Activated T-helper 1 cell treated with anti-CD3 and anti-CD28 coated beads, Interleukin-12 subunit alpha, Interleukin-12 subunit beta, Interleukin-2, Interleukin-4 antibody, amounts not matched to agents 30 ng/mL and 10 ng/mL and 1 ng/mL, durations not matched to agents 14 hours and 24 hours and 36 hours (primary cell): ENCODE measurements at regions of chr2 and their contacts with region 1.

Region 1: DNA sequence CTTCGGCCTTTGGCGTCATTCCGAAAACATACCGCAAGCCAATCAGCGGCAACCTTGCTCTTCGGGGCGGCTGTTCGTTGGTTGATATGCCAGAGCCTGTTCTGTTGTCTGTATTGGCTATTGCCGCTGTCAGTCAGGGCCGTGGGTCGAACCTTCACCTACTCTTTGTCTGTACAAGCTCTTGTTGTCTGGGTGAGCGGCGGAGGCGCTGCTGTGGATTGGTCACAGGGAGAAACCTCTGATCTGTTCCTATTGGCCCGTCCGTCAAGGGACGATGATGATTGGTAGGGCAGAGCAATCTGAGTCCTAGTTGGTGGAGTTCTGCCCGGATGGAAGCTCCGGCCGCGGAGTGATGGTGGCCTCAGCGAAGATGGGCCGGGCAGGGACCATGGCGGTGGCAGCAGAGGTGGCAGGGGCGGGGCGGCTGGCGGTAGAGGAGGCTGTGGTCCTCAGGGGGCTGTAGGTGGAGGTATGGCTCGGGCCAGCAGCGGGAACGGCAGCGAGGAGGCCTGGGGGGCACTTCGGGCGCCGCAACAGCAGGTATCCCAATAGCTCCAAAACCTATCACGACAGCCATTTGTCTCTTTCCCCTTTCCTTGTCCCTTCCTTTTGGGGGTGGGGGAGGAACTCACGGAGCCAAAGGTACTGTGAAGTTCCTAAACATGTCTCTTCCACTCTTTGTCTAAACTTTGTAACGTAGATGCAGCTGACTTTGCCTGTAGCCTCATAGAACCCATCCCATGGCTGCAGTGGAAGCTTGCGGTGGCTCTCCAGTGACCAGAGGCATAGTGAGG is at the start of gene WBP1:
- DNase-seq: peak; percentile 99
- H3K4me3 Mint-ChIP-seq: peak within 1 kb of the TSS; percentile 98
- H3K27ac Mint-ChIP-seq: peak within 1 kb of the TSS; percentile 98
- H3K4me1 Mint-ChIP-seq: peaks cover 61% of the 10 kb centered on the region
- H3K27me3 Mint-ChIP-seq: no peaks in the 10 kb centered on the region
- total RNA-seq, gene WBP1: 32.6 and 35.3 TPM in 2 replicates

Region 2: GRCh38 chr2:73071360-73072133 is 1386.8 kb before region 1 on chr2 and contains the start of gene SFXN5:
- intact Hi-C with region 1: loop called (anchors 2 kb)
- DNase-seq: peak; percentile 96
- H3K4me3 Mint-ChIP-seq: peak within 1 kb of the TSS; percentile 87
- H3K27ac Mint-ChIP-seq: peak within 1 kb of the TSS; percentile 90
- H3K4me1 Mint-ChIP-seq: peaks cover 28% of the 10 kb centered on the region
- H3K27me3 Mint-ChIP-seq: peaks cover 20% of the 10 kb centered on the region
- total RNA-seq, gene SFXN5: 9.5 and 12.0 TPM in 2 replicates

Region 3: GRCh38 chr2:73736855-73737779 is 721.2 kb before region 1 on chr2 and contains the start of gene TPRKB:
- intact Hi-C with region 1: loop called (anchors 1 kb)
- DNase-seq: peak; percentile 94
- H3K4me3 Mint-ChIP-seq: peak within 1 kb of the TSS; percentile 97
- H3K27ac Mint-ChIP-seq: peak within 1 kb of the TSS; percentile 88
- H3K4me1 Mint-ChIP-seq: peaks cover 18% of the 10 kb centered on the region
- H3K27me3 Mint-ChIP-seq: peaks cover 3% of the 10 kb centered on the region
- total RNA-seq, gene TPRKB: 41.5 and 42.7 TPM in 2 replicates

Region 4: GRCh38 chr2:74178201-74179062 is 279.9 kb before region 1 on chr2 and contains the start of gene MOB1A:
- intact Hi-C with region 1: loop called (anchors 2 kb)
- DNase-seq: peak; percentile 99
- H3K4me3 Mint-ChIP-seq: peak within 1 kb of the TSS; percentile 88
- H3K27ac Mint-ChIP-seq: peak within 1 kb of the TSS; percentile 85
- H3K4me1 Mint-ChIP-seq: peaks cover 40% of the 10 kb centered on the region
- H3K27me3 Mint-ChIP-seq: no peaks in the 10 kb centered on the region
- total RNA-seq, gene MOB1A: 207 and 221 TPM in 2 replicates

Region 5: DNA sequence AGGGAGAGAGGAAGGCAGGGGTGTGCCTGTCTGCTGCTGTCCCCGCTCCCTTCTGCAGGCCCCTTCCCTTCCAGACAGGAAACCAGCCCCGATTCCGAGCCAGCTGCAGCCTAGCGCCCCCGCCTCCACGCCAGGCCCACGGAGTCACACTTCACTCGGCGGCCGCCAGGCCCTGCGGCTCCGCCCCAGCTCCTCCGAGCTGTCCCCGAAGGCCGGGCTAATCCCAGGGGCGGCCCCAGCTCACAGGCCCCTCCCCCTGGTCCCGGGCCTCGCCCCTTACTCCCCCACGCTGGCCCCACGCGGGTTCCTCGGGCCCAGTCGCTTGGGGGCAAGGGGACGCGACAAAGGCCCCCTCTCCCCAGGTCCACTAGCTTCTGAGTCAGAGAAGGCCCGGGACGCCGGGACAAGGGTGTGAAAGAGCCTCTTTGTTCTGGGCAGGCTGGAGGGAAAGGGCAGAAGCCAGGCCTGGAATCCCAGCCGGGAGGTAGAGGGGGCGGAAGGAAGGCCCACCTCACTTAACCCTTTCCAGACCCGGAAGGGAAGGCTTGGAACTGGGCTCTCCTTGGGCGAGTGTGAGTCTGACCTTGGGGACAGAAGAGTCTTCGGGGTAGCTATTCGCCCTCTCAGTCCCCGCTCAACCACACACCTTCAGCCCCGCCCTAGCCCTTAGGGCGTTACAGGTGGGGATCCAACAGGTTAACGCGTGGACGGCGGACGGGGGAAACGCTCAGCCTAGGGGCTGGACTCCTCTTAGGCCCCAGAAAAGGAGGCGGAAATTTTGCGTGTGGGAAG is 17.8 kb before region 1 on chr2:
- intact Hi-C with region 1: loop called (anchors 2 kb)
- DNase-seq: peak; percentile 37
- H3K4me3 Mint-ChIP-seq: peak overlapping the region; percentile 73
- H3K27ac Mint-ChIP-seq: no peak overlapping the region
- H3K4me1 Mint-ChIP-seq: peaks cover 22% of the 10 kb centered on the region
- H3K27me3 Mint-ChIP-seq: peaks cover 36% of the 10 kb centered on the region

Region 6: DNA sequence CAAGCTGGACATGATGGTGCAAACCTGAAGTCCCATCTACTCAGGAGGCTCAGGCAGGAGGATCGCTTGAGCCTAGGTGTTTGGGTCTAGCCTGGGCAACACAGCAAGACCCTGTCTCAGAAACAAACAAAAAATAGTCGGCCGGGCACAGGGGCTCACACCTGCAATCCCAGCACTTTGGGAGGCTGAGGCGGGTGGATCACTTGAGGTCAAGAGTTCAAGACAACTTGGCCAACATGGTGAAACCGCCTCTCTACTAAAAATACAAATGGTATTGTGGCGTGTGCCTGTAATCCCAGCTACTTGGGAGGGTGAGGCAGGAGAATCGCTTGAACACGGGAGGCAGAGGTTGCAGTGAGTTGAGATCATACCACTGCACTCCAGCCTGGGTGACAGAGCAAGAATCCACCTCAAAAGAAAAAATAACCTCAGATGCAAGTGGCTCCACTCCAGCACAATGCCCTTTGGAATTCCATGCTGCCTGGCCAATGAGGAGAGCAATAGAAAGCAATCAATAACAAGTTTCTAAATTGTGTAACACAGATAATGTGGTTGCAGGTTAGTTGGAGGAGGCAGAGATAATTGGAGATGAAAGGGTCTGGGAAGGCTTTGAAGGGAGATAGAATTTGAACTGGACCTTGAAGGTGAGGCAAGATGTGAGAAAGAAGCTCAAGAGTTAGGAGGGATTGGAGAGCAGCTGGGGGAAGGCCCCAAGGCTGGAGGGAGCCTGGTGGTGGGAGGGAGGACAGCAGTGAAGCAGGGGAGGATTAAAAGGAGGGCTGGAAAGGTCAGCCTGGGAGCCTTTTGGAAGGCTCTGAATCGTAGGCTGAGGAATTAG is 30.5 kb after region 1 on chr2:
- intact Hi-C with region 1: no loop called
- DNase-seq: no peak
- H3K4me3 Mint-ChIP-seq: no peak overlapping the region
- H3K27ac Mint-ChIP-seq: no peak overlapping the region
- H3K4me1 Mint-ChIP-seq: peaks cover 5% of the 10 kb centered on the region
- H3K27me3 Mint-ChIP-seq: no peaks in the 10 kb centered on the region

Region 7: GRCh38 chr2:74529357-74530238 is 71.3 kb after region 1 on chr2 and contains the starts of genes AUP1 and HTRA2:
- intact Hi-C with region 1: loop called (anchors 1 kb)
- DNase-seq: peak; percentile 90
- H3K4me3 Mint-ChIP-seq: peak within 1 kb of the TSS; percentile 99
- H3K27ac Mint-ChIP-seq: peak within 1 kb of the TSS; percentile 95
- H3K4me1 Mint-ChIP-seq: peaks cover 49% of the 10 kb centered on the region
- H3K27me3 Mint-ChIP-seq: no peaks in the 10 kb centered on the region
- total RNA-seq, gene AUP1: 178 and 187 TPM in 2 replicates
- total RNA-seq, gene HTRA2: 57.0 and 57.3 TPM in 2 replicates

Region 8: DNA sequence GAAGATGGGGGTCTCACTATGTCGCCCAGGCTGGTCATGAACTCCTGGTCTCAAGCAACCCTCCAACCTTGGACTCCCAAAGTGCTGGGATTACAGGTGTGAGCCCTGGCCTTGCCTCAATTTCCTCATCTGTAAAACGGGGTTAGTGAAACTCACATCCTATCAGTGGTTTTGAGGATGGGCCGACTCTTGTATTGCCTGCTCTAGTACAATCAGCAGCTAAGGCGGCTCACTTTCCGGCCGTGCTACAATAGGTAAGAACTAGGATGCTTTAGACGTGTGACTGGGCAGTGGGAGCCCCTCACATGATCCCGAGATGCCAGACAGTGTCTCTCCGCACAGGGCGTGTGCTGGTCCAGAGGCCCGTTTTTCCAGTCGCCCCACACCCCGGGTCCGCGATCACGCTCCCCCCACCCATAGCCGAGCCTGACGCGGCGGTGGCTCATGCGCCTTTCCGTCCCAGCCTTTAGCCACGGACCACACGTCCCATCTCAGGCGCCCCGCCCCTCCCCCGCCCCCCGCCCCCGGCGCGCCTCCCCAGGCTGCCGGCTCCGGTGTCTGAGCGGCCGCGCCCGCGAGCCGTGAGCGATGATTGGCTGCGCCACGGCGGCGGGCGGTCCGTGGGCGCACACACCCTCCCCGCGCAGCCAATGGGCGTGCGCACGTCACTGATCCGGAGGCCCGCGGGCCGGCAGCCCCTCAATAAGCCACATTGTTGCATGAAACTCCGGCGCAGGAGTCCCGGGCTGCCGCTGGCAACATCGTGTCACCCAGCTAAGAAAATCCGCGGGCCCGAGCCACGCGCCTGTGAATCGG is 375.3 kb after region 1 on chr2 and contains the start of gene HK2:
- intact Hi-C with region 1: loop called (anchors 1 kb)
- DNase-seq: peak; percentile 85
- H3K4me3 Mint-ChIP-seq: peak within 1 kb of the TSS; percentile 96
- H3K27ac Mint-ChIP-seq: peak within 1 kb of the TSS; percentile 96
- H3K4me1 Mint-ChIP-seq: peaks cover 58% of the 10 kb centered on the region
- H3K27me3 Mint-ChIP-seq: peaks cover 3% of the 10 kb centered on the region
- total RNA-seq, gene HK2: 92.2 and 94.5 TPM in 2 replicates

Region 9: GRCh38 chr2:74864846-74865722 is 406.8 kb after region 1 on chr2:
- intact Hi-C with region 1: no loop called
- DNase-seq: no peak
- H3K4me3 Mint-ChIP-seq: no peak overlapping the region
- H3K27ac Mint-ChIP-seq: no peak overlapping the region
- H3K4me1 Mint-ChIP-seq: peaks cover 68% of the 10 kb centered on the region
- H3K27me3 Mint-ChIP-seq: no peaks in the 10 kb centered on the region